HEK293T (cell line): ENCODE measurements at regions of chr18 and their contacts with region 1.

Region 1: DNA sequence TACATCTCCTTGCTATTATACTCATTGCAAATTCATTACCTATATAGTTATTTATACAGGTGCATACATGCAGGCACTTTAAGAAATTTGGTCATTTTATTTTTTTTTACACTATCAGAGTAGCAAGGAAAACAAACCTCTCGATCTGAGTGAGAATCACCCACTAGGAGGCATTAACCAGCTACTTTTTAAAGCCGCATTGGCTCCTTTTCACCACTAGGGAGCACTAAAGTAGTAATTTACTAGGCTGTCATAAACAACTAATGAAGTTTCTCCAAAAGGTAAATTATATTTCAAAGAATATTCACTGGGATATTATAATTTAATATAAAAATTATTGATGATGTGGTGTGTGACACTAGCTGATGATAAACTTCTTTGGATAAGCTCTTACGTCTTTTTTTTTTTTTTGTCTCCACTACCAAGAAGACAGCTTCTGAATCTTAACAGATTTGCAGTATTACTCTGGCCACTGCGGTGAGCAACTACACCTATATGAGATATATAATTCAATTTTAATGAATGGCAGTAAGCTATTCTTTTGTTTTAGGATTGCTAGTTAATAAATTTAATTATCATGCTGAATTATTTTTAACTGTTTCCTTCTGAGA is 101.9 kb downstream of the NOL4 start:
- DNase-seq: peak; percentile 66

Region 2: GRCh38 chr18:33839441-33840211 is 283.2 kb before region 1 on chr18:
- CTCF ChIA-PET with region 1: interaction called, 13 read pairs
- POLR2A ChIA-PET with region 1: no interaction called
- DNase-seq: peak; percentile 78

Region 3: GRCh38 chr18:34224423-34225217 is 101.8 kb after region 1 on chr18 and contains the start of gene NOL4:
- CTCF ChIA-PET with region 1: interaction called, 21 read pairs
- POLR2A ChIA-PET with region 1: no interaction called
- DNase-seq: peak; percentile 96

Region 4: DNA sequence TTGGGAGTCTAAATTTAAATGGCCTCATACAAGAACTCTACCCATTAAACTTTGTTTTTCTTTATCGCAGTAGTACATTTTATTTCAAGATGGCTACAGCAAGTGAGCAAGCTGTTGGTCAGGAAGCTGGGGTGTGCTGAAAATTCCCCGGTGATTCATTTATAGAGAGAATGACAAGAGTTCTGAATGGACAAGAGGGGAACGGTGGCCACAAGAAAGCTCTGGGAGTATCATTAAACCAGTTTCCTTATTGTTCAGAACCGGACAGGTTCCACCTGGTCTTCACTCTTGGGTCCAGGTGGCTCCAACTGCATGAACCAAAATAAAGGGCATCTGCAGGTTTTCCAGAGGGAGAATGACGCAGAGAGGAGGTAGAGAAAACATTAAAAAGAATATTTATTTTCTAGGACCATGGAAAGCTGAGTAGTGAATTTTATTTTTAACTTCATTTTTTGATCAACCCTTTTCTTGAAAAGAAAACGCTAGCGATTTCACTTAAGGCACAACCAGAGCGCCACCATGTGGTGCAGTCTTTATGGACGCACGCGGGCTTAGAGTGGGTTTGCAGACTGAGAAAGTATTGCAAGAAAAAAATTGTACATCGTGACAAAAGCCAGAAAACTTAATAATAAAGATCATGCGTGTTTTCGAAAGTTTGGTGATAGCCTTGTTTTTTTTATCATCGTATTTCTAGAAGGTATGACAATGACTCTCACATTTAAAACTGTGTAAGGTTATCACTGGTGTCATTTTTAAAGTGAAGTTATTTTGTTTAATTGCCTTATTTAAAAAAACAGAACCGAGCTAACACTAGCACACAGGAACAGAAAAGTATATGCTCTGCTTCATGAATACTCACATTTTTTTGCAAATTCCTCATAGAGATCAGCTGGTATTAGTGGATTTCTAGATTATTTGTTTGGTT is 199.8 kb after region 1 on chr18:
- CTCF ChIA-PET with region 1: interaction called, 68 read pairs
- POLR2A ChIA-PET with region 1: no interaction called
- DNase-seq: peak; percentile 72